A673 (cell line): ENCODE measurements at regions of chr14 and their contacts with region 1.

Region 1: DNA sequence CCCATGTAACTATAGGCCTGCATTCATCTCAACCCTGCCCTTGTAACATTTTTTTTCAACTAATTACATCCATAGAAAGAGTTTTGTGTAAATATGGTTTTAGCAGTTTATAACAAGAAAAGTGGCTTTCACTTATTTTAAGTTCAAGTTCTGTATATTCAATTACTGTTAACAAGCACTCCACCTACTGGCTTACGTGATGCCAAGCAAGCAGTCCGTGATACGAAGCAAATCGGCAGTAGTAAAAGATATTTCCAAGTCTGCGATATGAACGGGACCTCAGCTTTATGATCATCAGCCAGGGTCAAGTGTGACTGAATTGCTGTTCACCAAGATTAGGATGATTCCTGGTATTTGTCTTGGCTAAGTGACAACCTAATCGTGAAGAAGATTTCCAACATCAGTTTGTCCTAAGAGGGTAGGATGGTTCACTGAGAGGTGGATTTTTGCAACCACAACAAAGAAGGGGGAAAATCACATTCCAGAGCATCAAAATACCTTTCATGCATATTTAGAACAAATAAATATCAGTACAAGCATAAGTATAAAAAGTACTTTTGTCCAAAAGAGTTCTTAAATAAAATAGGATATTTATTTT is 456.2 kb downstream of the FOXG1 start:
- DNase-seq: peak; percentile 57
- H3K4me3 ChIP-seq: no peak overlapping the region
- H3K27ac ChIP-seq: no peak overlapping the region
- H3K4me1 ChIP-seq: no peaks in the 10 kb centered on the region
- H3K27me3 ChIP-seq: peaks cover 33% of the 10 kb centered on the region
- CTCF ChIP-seq: peak; percentile 76

Region 2: DNA sequence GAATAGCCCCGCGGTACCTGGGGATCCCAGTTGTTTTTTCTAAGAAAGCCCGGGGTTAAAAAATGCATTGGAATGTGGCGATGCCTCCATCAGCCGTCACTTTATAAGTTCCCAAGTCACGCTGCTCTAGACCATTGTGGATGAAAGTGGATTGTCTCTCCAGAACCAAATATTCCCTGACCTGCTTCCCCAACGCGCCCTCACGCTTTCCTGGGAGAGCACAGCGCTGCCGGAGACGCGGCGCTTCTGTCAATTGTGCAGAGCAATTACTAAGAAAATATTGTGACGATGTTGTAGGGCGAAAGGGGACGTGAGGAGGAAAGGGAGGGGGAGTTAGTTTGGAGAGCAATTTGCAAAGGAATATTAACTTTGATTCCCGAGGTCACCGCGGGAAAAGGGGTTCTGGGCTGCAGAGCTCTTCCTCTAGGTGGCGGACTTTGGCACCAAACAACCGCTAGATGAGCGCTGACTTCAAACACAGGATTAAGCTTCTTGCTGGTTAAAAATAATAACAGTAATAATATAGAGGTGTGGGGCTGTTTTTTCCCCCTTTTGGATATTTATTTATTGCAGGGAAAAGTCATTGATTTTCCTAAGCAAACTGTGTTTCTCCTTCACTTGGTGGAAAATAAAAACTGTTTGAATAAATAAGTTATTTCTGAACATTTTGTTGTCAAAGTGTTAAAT is 465.7 kb before region 1 on chr14:
- CTCF ChIA-PET with region 1: no interaction called
- POLR2A ChIA-PET with region 1: no interaction called
- intact Hi-C with region 1: loop called (anchors 5 kb)
- DNase-seq: peak; percentile 68
- H3K4me3 ChIP-seq: no peak overlapping the region
- H3K27ac ChIP-seq: no peak overlapping the region
- H3K4me1 ChIP-seq: no peaks in the 10 kb centered on the region
- H3K27me3 ChIP-seq: peaks cover 78% of the 10 kb centered on the region
- CTCF ChIP-seq: peak; percentile 84

Region 3: GRCh38 chr14:28773861-28774691 is 448.7 kb before region 1 on chr14:
- CTCF ChIA-PET with region 1: no interaction called
- POLR2A ChIA-PET with region 1: no interaction called
- intact Hi-C with region 1: loop called (anchors 5 kb)
- DNase-seq: peak; percentile 64
- H3K4me3 ChIP-seq: no peak overlapping the region
- H3K27ac ChIP-seq: no peak overlapping the region
- H3K4me1 ChIP-seq: no peaks in the 10 kb centered on the region
- H3K27me3 ChIP-seq: peaks cover 100% of the 10 kb centered on the region
- CTCF ChIP-seq: peak; percentile 65

Region 4: GRCh38 chr14:29016050-29016900 is 206.5 kb before region 1 on chr14:
- CTCF ChIA-PET with region 1: no interaction called
- POLR2A ChIA-PET with region 1: no interaction called
- intact Hi-C with region 1: loop called (anchors 2 kb)
- DNase-seq: peak; percentile 63
- H3K4me3 ChIP-seq: no peak overlapping the region
- H3K27ac ChIP-seq: no peak overlapping the region
- H3K4me1 ChIP-seq: no peaks in the 10 kb centered on the region
- H3K27me3 ChIP-seq: peaks cover 5% of the 10 kb centered on the region
- CTCF ChIP-seq: peak; percentile 93

Region 5: DNA sequence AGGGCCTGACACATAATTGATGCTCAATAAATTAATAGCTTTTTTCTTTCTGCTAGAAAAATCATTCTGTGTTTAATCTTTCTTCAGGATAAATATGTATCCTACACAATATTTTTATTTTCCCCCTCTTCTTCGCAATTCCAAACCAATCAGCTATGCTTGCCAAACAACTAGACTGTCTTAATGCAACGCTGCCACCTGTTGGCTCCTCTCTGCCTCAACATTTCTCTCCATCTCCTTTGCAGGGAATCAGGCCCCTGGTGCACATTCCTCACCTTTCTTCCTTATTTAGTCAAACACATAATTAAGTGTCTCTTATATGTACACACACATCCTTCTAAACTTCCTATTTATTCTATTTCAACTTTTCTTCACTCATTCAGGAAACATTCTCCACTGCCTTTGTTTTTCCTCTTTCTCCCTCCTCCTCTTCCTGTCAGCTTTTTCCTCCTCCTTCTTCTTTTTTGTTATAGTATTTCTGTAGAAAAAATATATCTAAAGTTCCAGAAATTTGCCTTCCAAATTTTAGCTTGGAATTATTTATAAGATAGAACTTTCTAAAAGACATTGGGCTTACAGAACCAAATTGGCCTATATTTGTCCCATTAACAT is 298.9 kb after region 1 on chr14:
- CTCF ChIA-PET with region 1: no interaction called
- POLR2A ChIA-PET with region 1: no interaction called
- intact Hi-C with region 1: loop called (anchors 5 kb)
- DNase-seq: peak; percentile 54
- H3K4me3 ChIP-seq: no peak overlapping the region
- H3K27ac ChIP-seq: no peak overlapping the region
- H3K4me1 ChIP-seq: no peaks in the 10 kb centered on the region
- H3K27me3 ChIP-seq: peaks cover 6% of the 10 kb centered on the region
- CTCF ChIP-seq: peak; percentile 74